GM12878 (cell line): ENCODE measurements at regions of chr12 and their contacts with region 1.

Region 1: GRCh38 chr12:46303039-46303666 is 34.3 kb upstream of the SLC38A1 start:
- DNase-seq: peak; percentile 2
- ATAC-seq: peak; percentile 91
- H3K4me3 ChIP-seq: no peak overlapping the region
- H3K27ac ChIP-seq: no peak overlapping the region
- H3K4me1 ChIP-seq: no peaks in the 10 kb centered on the region
- H3K27me3 ChIP-seq: no peaks in the 10 kb centered on the region; a peak in 1 of 4 replicates
- CTCF ChIP-seq: peak; percentile 54 to 58 (median 57)
- EP300 ChIP-seq: no peak
- POLR2A ChIP-seq: no peak
- RAD21 ChIP-seq: peak; percentile 66

Region 2: DNA sequence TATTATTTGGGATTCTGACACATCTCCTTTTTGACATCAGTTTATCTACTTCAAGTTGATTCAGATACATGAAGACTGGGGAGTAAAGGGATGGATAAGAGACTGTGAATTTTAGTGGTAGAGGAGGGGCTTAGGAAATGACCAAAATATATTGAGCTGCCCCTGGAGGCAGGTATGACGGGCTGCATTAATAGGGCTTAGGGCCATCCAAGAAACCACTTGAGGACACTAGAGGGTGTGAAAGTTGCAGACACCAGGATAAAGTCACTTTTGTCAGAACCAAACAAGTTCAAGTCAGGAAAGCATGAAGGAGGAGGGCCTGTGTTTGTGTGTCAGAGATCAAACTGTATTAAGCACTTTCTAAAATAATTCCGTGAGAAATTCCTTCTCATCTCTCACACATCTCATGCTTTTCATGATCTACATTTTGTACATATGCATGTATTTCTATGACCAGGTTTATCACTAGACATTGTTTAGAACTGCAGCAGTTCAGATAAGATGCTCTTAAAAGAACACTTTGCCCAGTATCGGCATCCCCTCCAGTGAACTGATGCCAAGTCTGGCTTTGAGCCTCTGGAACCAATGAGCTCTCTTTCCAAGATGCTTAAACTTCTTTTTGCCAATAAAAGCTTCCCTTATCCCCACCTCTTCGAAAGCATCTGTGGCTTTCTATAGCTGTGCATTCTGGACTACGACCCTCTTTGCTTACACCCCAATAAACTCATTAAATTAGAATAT is 171.3 kb before region 1 on chr12:
- CTCF ChIA-PET with region 1: interaction called, 28 read pairs
- POLR2A ChIA-PET with region 1: no interaction called
- RAD21 ChIA-PET with region 1: interaction called, 50 read pairs
- SMC1A ChIA-PET with region 1: interaction called, 5 read pairs
- in situ Hi-C with region 1: no loop called
- intact Hi-C with region 1: no loop called
- DNase-seq: no peak
- ATAC-seq: peak; percentile 75
- H3K4me3 ChIP-seq: no peak overlapping the region
- H3K27ac ChIP-seq: no peak overlapping the region
- H3K4me1 ChIP-seq: no peaks in the 10 kb centered on the region
- H3K27me3 ChIP-seq: no peaks in the 10 kb centered on the region; a peak in 1 of 4 replicates
- CTCF ChIP-seq: peak in 2 of 3 experiments; percentile 29 to 41; a peak in 2 of 6 replicates
- EP300 ChIP-seq: no peak
- POLR2A ChIP-seq: no peak
- RAD21 ChIP-seq: peak; percentile 52; the same call in 1 of the 2 replicates

Region 3: GRCh38 chr12:46318037-46318436 is 14.9 kb after region 1 on chr12:
- CTCF ChIA-PET with region 1: interaction called, 16 read pairs
- POLR2A ChIA-PET with region 1: no interaction called
- RAD21 ChIA-PET with region 1: no interaction called
- SMC1A ChIA-PET with region 1: interaction called, 4 read pairs
- in situ Hi-C with region 1: no loop called
- intact Hi-C with region 1: no loop called
- DNase-seq: no peak
- ATAC-seq: no peak
- H3K4me3 ChIP-seq: no peak overlapping the region
- H3K27ac ChIP-seq: no peak overlapping the region
- H3K4me1 ChIP-seq: no peaks in the 10 kb centered on the region
- H3K27me3 ChIP-seq: no peaks in the 10 kb centered on the region
- CTCF ChIP-seq: no peak
- EP300 ChIP-seq: no peak
- POLR2A ChIP-seq: no peak
- RAD21 ChIP-seq: no peak